Sigmoid colon (tissue), 7 donors: ENCODE measurements at regions of chr12 and their contacts with region 1.

Region 1: GRCh38 chr12:119328111-119328510 is 6.4 kb upstream of the CCDC60 start:
- DNase-seq: peak; percentile 69
- H3K4me3 ChIP-seq: no peak overlapping the region
- H3K27ac ChIP-seq: peak overlapping the region; percentile 80 to 82 (median 82)
- H3K4me1 ChIP-seq: peaks cover 0 to 50% (median 45%) of the 10 kb centered on the region in 4 donors
- H3K27me3 ChIP-seq: no peaks in the 10 kb centered on the region
- CTCF ChIP-seq: peak in 3 of 4 experiments; percentile 21 to 40 (median 25)
- EP300 ChIP-seq: no peak
- POLR2A ChIP-seq: no peak

Region 2: DNA sequence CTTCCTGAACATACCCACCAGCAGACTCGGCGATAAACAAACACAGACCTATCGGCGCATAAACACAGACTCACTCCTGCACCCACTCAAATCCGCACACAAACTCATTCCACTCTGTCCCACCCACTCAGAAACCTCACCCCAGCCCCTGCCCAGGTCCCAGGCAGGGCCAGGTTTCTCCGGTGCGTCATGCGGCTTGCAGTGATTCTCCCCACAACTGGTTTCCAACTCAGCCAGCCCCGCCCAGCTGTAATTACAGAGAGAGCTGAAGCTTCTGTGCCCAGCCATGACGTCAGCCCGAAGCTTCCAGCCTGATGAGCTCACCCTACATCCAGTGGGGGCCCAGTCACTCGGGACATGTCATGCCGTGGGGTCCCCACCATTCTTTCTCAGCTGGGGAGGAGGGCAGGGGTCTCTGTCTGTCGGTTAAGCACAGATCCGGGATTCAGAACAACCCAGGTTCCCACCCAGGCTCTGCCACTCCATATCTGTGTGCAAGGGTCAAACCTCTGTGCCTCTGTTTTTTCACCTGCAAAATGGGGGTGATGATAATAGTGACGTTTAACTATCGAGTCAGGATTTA is 151.8 kb before region 1 on chr12:
- intact Hi-C with region 1: loop called (anchors 2 kb)
- DNase-seq: peak; percentile 99
- H3K4me3 ChIP-seq: peak overlapping the region; percentile 20 to 55 (median 40)
- H3K27ac ChIP-seq: peak overlapping the region; percentile 91 to 99 (median 96)
- H3K4me1 ChIP-seq: peaks cover 0 to 19% (median 16%) of the 10 kb centered on the region in 4 donors
- H3K27me3 ChIP-seq: no peaks in the 10 kb centered on the region
- CTCF ChIP-seq: no peak
- EP300 ChIP-seq: peak in 2 of 4 donors; percentile 63 to 92
- POLR2A ChIP-seq: peak in 1 of 2 donors; percentile 41

Region 3: GRCh38 chr12:119369907-119370546 is 41.9 kb after region 1 on chr12:
- intact Hi-C with region 1: loop called (anchors 5 kb)
- DNase-seq: no peak
- H3K4me3 ChIP-seq: no peak overlapping the region
- H3K27ac ChIP-seq: peak overlapping the region; percentile 65 to 76 (median 70)
- H3K4me1 ChIP-seq: peaks cover 0 to 58% (median 43%) of the 10 kb centered on the region in 4 donors
- H3K27me3 ChIP-seq: no peaks in the 10 kb centered on the region
- CTCF ChIP-seq: no peak
- EP300 ChIP-seq: peak in 1 of 4 donors; percentile 51
- POLR2A ChIP-seq: no peak

Region 4: DNA sequence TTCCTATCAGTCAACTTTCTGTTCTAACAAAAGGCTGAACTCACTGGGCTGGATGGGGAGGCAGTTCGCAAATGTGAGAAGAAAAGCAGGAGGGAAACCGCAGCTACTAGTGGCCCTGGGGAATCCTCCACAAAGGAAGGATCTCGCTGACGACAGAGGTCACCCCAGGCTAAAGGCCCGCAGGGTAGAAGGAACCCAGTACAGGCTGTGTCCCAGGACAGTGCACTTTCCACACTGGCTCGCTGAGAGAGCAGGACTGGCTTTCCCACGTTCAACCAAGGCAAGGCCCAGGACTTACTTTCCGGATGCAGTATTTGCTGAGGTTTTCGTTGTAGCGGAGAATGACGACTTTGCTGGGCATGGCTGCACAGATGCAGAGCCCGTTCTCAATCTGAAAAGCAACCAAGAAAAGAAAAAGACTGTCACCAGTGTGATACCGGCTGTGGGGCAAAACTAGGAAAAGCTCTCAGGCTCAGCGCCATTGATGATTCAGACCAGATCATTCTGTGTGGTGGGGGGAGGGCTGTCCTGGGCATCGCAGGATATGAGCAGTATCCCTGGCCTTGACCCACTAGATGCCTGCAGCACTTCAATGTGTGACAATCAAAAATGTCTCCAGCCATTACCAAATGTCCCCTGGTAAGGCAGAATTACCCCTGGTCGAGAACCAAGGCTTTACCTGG is 376.1 kb after region 1 on chr12:
- intact Hi-C with region 1: no loop called
- DNase-seq: no peak
- H3K4me3 ChIP-seq: no peak overlapping the region
- H3K27ac ChIP-seq: no peak overlapping the region
- H3K4me1 ChIP-seq: no peaks in the 10 kb centered on the region
- H3K27me3 ChIP-seq: no peaks in the 10 kb centered on the region
- CTCF ChIP-seq: no peak
- EP300 ChIP-seq: no peak
- POLR2A ChIP-seq: no peak